ENCODE measurements at regions of chr5 and their contacts with region 1.

Region 1: GRCh38 chr5:53262348-53262970 is 152.9 kb upstream of the MOCS2 start:
- DNase-seq: peak; percentile 55
- H3K4me3 Mint-ChIP-seq: no peak overlapping the region
- H3K27ac Mint-ChIP-seq: peak overlapping the region; percentile 8
- H3K4me1 Mint-ChIP-seq: peaks cover 6% of the 10 kb centered on the region
- H3K27me3 Mint-ChIP-seq: no peaks in the 10 kb centered on the region
- CTCF ChIP-seq: peak; percentile 64

Region 2: GRCh38 chr5:53334431-53334941 is 72.0 kb after region 1 on chr5:
- CTCF ChIA-PET with region 1: interaction called, 3 read pairs
- intact Hi-C with region 1: loop called (anchors 1 kb)
- DNase-seq: no peak
- H3K4me3 Mint-ChIP-seq: no peak overlapping the region
- H3K27ac Mint-ChIP-seq: peak overlapping the region; percentile 77
- H3K4me1 Mint-ChIP-seq: peaks cover 47% of the 10 kb centered on the region
- H3K27me3 Mint-ChIP-seq: no peaks in the 10 kb centered on the region
- CTCF ChIP-seq: no peak

Region 3: GRCh38 chr5:53430261-53431252 is 168.1 kb after region 1 on chr5:
- CTCF ChIA-PET with region 1: interaction called, 19 read pairs
- intact Hi-C with region 1: loop called (anchors 1 kb)
- DNase-seq: peak; percentile 34
- H3K4me3 Mint-ChIP-seq: no peak overlapping the region
- H3K27ac Mint-ChIP-seq: peak overlapping the region; percentile 27
- H3K4me1 Mint-ChIP-seq: peaks cover 51% of the 10 kb centered on the region
- H3K27me3 Mint-ChIP-seq: no peaks in the 10 kb centered on the region
- CTCF ChIP-seq: peak; percentile 66

Region 4: GRCh38 chr5:53874409-53874808 is 612.0 kb after region 1 on chr5:
- CTCF ChIA-PET with region 1: no interaction called
- intact Hi-C with region 1: loop called (anchors 5 kb)
- DNase-seq: peak; percentile 9
- H3K4me3 Mint-ChIP-seq: no peak overlapping the region
- H3K27ac Mint-ChIP-seq: no peak overlapping the region
- H3K4me1 Mint-ChIP-seq: no peaks in the 10 kb centered on the region
- H3K27me3 Mint-ChIP-seq: no peaks in the 10 kb centered on the region
- CTCF ChIP-seq: no peak

Measured in Calu3 (cell line).